ENCODE measurements at regions of chr16 and their contacts with region 1.

Region 1: GRCh38 chr16:31073968-31074813 is at the starts of genes ZNF646 and ZNF668:
- DNase-seq: peak; percentile 99
- H3K4me3 Mint-ChIP-seq: peak within 1 kb of the TSS; percentile 94
- H3K27ac Mint-ChIP-seq: peak within 1 kb of the TSS; percentile 93
- H3K4me1 Mint-ChIP-seq: peaks cover 31% of the 10 kb centered on the region
- H3K27me3 Mint-ChIP-seq: no peaks in the 10 kb centered on the region
- total RNA-seq, gene ZNF646: 16.7 to 17.4 TPM
- total RNA-seq, gene ZNF668: 9.5 to 10.1 TPM

Region 2: DNA sequence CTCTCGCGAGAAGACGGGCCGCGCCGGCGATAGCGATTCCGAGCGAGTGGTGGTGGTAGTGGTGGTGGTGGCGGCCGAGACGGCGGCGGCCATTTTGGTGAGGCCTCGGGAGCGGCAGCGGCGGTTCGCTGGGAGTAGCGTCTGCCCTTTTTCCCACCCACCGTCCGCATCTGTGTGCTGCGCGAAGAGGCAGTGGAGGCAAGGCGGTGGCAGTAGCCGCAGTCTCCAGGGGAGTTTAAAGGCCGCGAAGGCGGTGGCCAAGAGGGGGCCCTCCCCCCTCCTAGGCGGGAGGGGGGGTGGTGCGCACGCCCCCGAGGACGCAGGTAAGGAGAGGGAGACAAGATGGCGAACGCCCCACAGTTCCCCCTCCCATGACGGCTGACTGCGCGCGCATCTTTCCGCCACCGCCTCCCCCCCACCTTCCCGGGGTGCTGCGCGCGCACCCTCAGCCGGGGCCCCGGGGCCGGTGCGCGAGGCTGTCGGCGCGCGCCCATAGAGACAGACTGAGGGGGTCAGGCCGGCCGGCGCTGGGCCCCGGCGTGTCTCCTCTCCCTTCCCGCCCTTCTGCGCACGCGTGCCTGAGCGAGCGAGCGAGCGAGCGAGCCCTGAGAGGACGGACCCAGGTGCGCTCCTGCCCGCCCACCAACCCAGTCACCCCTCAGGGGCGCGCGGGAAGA is 375.9 kb before region 1 on chr16:
- CTCF ChIA-PET with region 1: no interaction called
- intact Hi-C with region 1: loop called (anchors 1 kb)
- DNase-seq: peak; percentile 100
- H3K4me3 Mint-ChIP-seq: peak overlapping the region; percentile 94
- H3K27ac Mint-ChIP-seq: peak overlapping the region; percentile 99
- H3K4me1 Mint-ChIP-seq: peaks cover 37% of the 10 kb centered on the region
- H3K27me3 Mint-ChIP-seq: no peaks in the 10 kb centered on the region

Region 3: GRCh38 chr16:30957456-30958174 is 116.6 kb before region 1 on chr16 and contains the start of gene SETD1A:
- CTCF ChIA-PET with region 1: no interaction called
- intact Hi-C with region 1: loop called (anchors 1 kb)
- DNase-seq: peak; percentile 99
- H3K4me3 Mint-ChIP-seq: peak within 1 kb of the TSS; percentile 93
- H3K27ac Mint-ChIP-seq: peak within 1 kb of the TSS; percentile 99
- H3K4me1 Mint-ChIP-seq: peaks cover 27% of the 10 kb centered on the region
- H3K27me3 Mint-ChIP-seq: no peaks in the 10 kb centered on the region
- total RNA-seq, gene SETD1A: 14.3 to 14.6 TPM

Region 4: DNA sequence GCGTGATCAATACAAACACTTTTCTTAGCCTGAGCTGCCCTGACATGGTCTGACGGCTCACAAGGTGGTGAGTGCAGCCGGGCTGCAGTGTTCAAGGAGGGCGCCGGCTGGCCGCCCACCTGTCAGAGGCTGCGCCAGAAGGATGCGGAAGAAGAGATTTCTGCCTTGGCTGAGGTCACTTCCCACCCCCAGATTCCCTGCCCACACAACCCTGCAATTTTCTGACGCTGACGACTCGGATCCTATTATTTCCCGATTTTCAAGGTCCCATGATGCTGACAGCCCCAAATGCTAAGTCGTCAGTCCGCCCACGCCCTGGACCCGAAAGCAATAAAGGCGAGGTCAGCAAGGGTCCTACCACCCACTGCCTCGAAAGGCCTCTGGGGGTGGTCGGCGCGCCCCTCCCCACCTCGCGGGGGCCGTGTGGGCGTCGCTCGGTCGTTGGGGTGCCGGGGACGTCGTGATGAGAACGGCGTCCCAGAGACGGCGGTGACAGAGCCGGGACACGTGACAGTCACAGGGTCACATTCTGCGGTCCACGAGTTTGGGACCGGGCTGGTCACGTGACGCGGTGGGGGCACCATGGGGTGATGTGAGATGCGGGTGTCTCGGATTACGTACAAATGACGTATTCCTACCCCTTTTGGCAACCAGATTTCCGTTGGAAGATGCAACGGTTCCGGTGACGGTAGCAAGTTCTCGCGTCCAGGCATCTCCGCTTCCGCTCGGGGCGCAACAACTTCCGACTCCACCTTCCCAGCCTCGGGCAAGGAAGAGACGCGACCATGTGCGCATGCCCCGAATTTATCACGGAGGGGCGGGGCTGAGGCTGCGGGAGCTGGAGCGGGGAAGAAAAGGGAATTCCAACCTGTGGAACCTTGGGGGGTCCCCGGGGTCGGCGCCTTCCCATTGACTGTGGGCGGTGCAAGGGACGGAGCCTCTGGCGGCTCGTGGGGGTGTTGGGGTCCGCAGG is 41.2 kb before region 1 on chr16 and contains the start of gene STX4:
- CTCF ChIA-PET with region 1: no interaction called
- intact Hi-C with region 1: loop called (anchors 1 kb)
- DNase-seq: peak; percentile 99
- H3K4me3 Mint-ChIP-seq: peak within 1 kb of the TSS; percentile 96
- H3K27ac Mint-ChIP-seq: peak within 1 kb of the TSS; percentile 93
- H3K4me1 Mint-ChIP-seq: peaks cover 22% of the 10 kb centered on the region
- H3K27me3 Mint-ChIP-seq: no peaks in the 10 kb centered on the region
- total RNA-seq, gene STX4: 32.9 to 38.0 TPM

Region 5: DNA sequence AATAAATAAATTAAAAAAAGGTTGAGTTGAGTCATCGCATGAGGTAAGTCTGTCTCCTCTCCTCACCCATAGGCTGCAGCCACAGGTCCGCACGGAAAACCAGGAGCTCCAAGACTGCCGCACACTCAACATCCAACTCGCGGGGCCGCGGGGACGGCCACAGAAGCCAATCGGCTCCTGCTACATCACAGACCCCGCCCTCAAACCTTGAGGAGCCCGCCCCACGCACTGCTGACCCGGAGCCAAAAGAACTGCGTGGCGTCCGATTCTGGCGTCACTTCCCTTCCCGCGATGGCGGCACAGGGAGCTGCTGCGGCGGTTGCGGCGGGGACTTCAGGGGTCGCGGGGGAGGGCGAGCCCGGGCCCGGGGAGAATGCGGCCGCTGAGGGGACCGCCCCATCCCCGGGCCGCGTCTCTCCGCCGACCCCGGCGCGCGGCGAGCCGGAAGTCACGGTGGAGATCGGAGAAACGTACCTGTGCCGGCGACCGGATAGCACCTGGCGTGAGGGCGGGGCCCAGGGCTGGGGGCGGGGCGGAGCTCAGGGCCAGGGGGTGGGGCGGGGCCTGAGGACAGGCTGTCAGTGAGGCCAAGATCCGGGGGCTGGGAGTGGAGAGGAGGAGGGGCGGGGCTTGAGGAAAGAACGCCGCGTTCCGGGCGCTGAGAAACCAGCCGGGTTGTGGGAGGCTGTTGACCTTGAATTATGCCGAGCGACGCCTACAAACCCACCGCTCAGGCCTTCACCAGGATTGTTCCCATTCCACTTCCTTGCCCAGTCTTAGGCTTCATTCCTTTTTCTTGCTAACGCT is 43.4 kb after region 1 on chr16 and contains the start of gene KAT8:
- CTCF ChIA-PET with region 1: interaction called, 3 read pairs
- intact Hi-C with region 1: loop called (anchors 1 kb)
- DNase-seq: peak; percentile 99
- H3K4me3 Mint-ChIP-seq: peak within 1 kb of the TSS; percentile 82
- H3K27ac Mint-ChIP-seq: peak within 1 kb of the TSS; percentile 70
- H3K4me1 Mint-ChIP-seq: peaks cover 28% of the 10 kb centered on the region
- H3K27me3 Mint-ChIP-seq: no peaks in the 10 kb centered on the region
- total RNA-seq, gene KAT8: 58.1 to 64.5 TPM

Region 6: GRCh38 chr16:31265329-31266245 is 191.4 kb after region 1 on chr16:
- CTCF ChIA-PET with region 1: no interaction called
- intact Hi-C with region 1: loop called (anchors 2 kb)
- DNase-seq: peak; percentile 92
- H3K4me3 Mint-ChIP-seq: no peak overlapping the region
- H3K27ac Mint-ChIP-seq: peak overlapping the region; percentile 79
- H3K4me1 Mint-ChIP-seq: peaks cover 31% of the 10 kb centered on the region
- H3K27me3 Mint-ChIP-seq: peaks cover under 1% of the 10 kb centered on the region

Region 7: GRCh38 chr16:31868691-31869167 is 794.5 kb after region 1 on chr16:
- CTCF ChIA-PET with region 1: no interaction called
- intact Hi-C with region 1: loop called (anchors 2 kb)
- DNase-seq: peak; percentile 90
- H3K4me3 Mint-ChIP-seq: peak overlapping the region; percentile 46
- H3K27ac Mint-ChIP-seq: peak overlapping the region; percentile 82
- H3K4me1 Mint-ChIP-seq: peaks cover 50% of the 10 kb centered on the region
- H3K27me3 Mint-ChIP-seq: no peaks in the 10 kb centered on the region

Measured in activated naive CD4-positive, alpha-beta T cell treated with anti-CD3 and anti-CD28 coated beads for 36 hours (primary cell).